PC-3 (cell line): ENCODE measurements at regions of chr3 and their contacts with region 1.

Region 1: DNA sequence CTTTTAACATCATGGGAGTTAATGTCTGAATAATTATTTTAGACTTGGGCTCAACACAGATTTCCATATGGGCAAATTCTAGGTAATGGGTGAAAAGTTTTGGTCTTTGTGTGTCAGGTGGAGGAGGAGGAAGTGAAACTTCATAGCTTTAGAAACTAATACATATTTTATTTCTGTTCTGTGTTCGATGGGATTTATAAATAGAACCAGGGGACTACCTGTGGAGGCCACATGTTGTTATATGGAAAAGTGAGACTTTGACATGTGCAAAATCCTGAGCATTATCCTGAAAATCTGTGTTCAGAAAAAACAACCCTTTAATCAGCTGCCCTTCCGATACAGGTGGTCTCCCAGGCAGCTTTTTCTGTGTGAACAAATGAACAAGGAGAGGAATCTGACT is 209.5 kb downstream of the SOX2 start:
- DNase-seq: no peak
- ATAC-seq: no peak
- H3K4me3 ChIP-seq: no peak overlapping the region
- H3K27ac ChIP-seq: no peak overlapping the region
- H3K4me1 ChIP-seq: peaks cover 34% of the 10 kb centered on the region
- H3K27me3 ChIP-seq: no peaks in the 10 kb centered on the region
- CTCF ChIP-seq: no peak

Region 2: DNA sequence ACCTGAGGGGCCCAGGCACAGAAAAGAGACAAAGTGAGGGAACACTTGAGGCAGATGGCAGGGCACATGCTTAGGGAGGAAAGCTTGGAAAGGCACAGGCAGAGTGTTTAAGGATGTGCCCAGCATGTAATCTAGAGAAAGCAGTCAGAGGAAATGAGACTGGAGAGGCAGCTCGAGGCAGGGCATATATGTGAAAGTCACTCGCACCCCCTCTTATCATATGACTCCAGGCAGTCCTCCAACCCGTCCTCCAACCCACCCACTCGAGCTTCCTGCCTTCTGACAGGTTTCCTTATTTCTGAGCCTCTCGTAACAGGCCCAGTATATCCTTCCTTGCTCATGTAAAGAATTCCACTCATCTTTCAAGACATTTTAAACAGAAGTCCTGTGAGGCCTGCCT is 84.5 kb after region 1 on chr3:
- CTCF ChIA-PET with region 1: no interaction called
- POLR2A ChIA-PET with region 1: interaction called, 10 read pairs
- intact Hi-C with region 1: no loop called
- DNase-seq: no peak
- ATAC-seq: no peak
- H3K4me3 ChIP-seq: no peak overlapping the region
- H3K27ac ChIP-seq: no peak overlapping the region
- H3K4me1 ChIP-seq: no peaks in the 10 kb centered on the region
- H3K27me3 ChIP-seq: peaks cover 91% of the 10 kb centered on the region
- CTCF ChIP-seq: no peak